ENCODE measurements at regions of chr20 and their contacts with region 1.

Region 1: GRCh38 chr20:31587545-31588389 is 17.3 kb upstream of the ID1 start:
- DNase-seq: no peak
- ATAC-seq: peak; percentile 60
- H3K4me3 ChIP-seq: peak overlapping the region; percentile 5 to 46; a peak in 2 of 4 replicates
- H3K27ac ChIP-seq: peak overlapping the region; percentile 42; the same call in 1 of the 2 replicates
- H3K4me1 ChIP-seq: peaks cover 52 to 54% of the 10 kb centered on the region in 2 experiments
- H3K27me3 ChIP-seq: no peaks in the 10 kb centered on the region
- CTCF ChIP-seq: no peak
- POLR2A ChIP-seq: no peak
- RAD21 ChIP-seq: no peak

Region 2: DNA sequence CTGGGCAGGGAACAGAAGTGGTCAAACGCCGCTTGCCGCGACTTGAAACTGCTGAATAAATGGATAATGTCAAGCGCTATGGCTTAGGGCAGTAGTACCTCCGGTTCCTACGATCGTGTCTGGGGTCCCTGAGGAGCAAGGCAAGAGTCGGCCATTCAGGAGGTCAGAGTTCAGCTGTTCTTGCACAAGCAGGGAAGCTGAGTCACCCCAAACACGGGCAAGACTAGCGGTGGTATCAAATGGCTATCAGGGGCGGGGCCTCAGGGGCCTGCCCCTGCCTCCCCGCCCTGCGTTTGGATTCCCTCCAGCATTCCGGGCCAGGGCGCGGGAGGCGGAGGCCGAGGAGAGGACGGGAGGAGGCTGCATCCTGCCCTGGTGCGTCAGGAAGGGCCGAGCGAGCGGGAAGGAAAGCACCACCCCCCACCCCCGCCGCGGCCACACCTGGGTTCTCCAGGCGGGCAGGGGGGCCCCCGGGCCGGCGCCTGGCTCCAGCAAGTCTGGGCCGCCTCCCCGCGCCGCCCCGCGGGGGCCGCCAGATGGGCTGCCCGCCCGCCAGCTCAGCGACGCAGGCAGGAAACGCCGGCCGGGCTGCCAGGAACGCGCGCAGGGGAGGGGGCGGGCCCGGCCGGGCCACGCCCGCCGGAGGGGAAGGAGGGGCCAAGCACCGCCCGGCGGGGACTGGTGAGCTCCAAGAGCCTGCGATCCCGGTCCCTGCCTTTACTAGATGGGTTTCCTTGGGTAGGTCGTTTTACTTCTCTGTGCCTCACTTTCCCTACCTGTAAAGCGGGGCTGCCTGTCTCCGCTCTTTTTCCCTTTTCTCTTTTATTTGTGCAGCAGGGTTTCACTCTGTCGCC is 14.8 kb before region 1 on chr20:
- CTCF ChIA-PET with region 1: interaction called, 17 read pairs
- POLR2A ChIA-PET with region 1: interaction called, 85 read pairs
- RAD21 ChIA-PET with region 1: interaction called, 6 to 12 read pairs
- intact Hi-C with region 1: no loop called
- DNase-seq: peak; percentile 96
- ATAC-seq: peak; percentile 72
- H3K4me3 ChIP-seq: peak overlapping the region; percentile 54 to 61
- H3K27ac ChIP-seq: peak overlapping the region; percentile 98
- H3K4me1 ChIP-seq: peaks cover 73 to 79% of the 10 kb centered on the region in 2 experiments
- H3K27me3 ChIP-seq: no peaks in the 10 kb centered on the region
- CTCF ChIP-seq: no peak
- POLR2A ChIP-seq: peak; percentile 59
- RAD21 ChIP-seq: no peak